HEK293 (cell line): ENCODE measurements at regions of chr17 and their contacts with region 1.

Region 1: GRCh38 chr17:79839363-79840268 is at the start of gene CBX4:
- H3K4me3 ChIP-seq: peak within 1 kb of the TSS; percentile 74
- H3K27ac ChIP-seq: peak within 1 kb of the TSS; percentile 81
- H3K4me1 ChIP-seq: peaks cover 23% of the 10 kb centered on the region
- CTCF ChIP-seq: peak; percentile 99

Region 2: DNA sequence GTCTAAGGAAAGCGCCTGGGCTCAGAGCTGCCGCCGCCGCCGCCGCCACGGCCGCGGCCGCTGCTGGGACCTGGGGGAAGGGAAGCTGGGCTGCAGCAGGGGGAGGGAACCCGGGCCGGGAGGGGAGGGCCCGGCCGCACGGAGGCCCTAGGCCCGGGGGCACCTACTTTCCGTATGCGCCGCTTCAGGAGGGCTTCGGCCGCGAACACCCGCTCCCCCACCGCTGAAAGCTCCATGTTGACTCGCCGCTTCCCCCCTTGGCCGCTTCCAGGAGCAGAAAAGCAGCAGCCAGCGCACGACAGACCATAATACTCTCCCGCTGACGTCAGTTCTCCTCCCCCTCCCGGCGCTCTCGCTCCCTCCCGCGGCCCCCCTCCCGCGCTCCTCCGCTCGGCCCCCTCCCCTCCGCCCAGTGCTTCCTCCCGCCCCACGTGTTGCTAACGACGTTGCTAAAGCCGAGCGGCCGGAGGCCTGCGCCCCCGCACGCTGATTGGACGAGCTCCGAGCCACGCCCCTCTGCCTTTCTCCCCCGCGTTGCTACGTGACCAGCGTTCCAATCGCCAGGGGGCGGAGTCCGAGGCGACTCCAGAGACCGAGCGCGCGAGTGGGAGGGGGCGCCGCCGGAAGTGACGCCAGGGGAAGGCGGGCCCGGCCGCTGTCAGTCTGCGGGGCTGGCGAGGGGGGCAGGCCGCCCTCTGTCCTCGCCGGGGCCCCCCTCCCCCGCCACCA is 42.7 kb before region 1 on chr17 and contains the start of gene CBX8:
- CTCF ChIA-PET with region 1: interaction called, 8 read pairs
- POLR2A ChIA-PET with region 1: interaction called, 52 read pairs
- H3K4me3 ChIP-seq: peak within 1 kb of the TSS; percentile 95
- H3K27ac ChIP-seq: peak within 1 kb of the TSS; percentile 88
- H3K4me1 ChIP-seq: peaks cover 30% of the 10 kb centered on the region
- CTCF ChIP-seq: no peak; the same call in 1 of the 2 replicates

Region 3: DNA sequence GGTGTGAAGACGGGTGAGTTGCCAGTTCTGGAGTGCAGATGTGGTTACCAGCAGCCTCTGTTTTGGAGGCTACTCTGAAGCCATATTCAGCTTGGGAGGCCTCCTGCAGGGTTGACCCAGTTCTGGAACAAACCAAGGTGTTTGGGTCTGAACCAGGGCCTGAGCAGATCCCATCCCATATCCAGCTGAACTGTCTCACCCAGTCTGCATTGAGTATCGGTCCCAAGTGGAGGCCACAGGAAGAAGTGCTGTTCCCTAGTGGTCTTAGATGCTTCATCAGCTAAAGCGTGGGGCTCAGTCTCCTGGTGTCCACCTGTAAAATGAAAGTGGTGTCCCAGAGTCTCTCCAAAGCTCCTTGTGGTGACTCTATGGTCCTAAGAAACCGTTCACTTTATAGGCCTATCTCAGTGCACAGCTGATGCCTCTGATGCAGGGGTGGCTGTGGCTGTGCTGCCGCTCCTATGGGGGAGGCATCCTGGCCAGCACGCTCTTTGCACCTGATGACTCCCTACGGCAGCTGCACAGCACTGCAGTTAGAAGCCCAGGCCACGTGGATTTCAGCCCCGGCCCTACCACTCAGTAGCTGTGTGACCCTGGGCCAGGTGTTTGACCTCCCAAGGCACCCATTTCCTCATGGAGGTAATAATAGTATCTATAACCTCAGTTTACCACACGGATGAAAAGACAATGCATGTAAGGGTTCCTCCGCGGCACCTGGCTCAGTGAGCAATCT is 21.4 kb before region 1 on chr17:
- CTCF ChIA-PET with region 1: interaction called, 12 read pairs
- POLR2A ChIA-PET with region 1: interaction called, 74 read pairs
- H3K4me3 ChIP-seq: no peak overlapping the region
- H3K27ac ChIP-seq: no peak overlapping the region
- H3K4me1 ChIP-seq: peaks cover 3% of the 10 kb centered on the region
- CTCF ChIP-seq: no peak

Region 4: GRCh38 chr17:79850571-79851461 is 11.2 kb after region 1 on chr17:
- CTCF ChIA-PET with region 1: interaction called, 34 read pairs
- POLR2A ChIA-PET with region 1: interaction called, 19 read pairs
- H3K4me3 ChIP-seq: no peak overlapping the region
- H3K27ac ChIP-seq: no peak overlapping the region
- H3K4me1 ChIP-seq: no peaks in the 10 kb centered on the region
- CTCF ChIP-seq: no peak

Region 5: GRCh38 chr17:80117491-80118401 is 278.1 kb after region 1 on chr17:
- CTCF ChIA-PET with region 1: no interaction called
- POLR2A ChIA-PET with region 1: no interaction called
- H3K4me3 ChIP-seq: no peak overlapping the region
- H3K27ac ChIP-seq: no peak overlapping the region
- H3K4me1 ChIP-seq: no peaks in the 10 kb centered on the region
- CTCF ChIP-seq: no peak